ENCODE measurements at regions of chr6 and their contacts with region 1.

Region 1: DNA sequence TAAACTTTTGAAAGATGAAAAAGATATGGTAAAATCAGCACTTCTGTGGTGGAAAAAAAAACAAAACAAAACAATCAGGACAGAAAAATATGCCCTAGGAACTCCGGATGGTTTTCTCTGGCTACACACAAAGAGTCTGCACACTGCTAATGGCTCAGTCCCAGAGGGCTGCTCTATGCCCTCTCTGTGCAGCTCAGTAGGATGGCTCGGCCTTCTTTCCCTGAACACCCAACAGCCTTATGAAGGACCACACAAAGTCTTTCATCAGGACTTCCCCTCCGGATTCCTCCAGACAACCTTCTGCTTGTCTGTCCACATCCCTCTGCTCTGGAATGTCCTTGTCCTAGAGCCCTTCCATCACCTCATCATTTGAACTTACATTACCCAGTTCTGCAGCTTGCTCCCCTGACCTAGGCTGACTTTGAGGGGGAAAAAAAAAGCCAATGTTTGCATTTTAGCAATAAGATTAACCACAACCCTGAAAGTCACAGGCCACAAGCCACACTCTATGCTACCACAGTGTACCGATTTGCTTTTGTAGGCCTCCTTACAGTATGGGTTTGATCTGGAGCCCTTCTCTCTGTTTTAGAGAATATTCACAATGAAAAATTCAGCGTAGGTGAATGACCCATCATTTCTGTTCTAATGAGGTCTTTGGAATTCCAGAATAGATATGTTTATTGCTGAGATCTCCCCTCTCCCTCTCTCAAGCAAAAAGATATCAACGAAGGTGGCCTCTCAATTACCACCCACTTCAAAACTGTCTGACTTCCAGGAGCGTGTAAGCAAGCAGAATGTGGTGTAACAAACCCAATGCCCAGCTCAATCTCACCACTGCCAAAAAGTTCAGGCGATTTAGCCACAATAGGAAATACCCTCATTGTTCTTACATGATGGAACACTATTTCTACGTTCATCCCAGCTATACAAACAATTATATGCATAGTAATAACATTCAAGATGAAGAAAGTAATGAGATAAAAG is 164.0 kb downstream of the GMDS start:
- DNase-seq: peak; percentile 35
- H3K4me3 Mint-ChIP-seq: peak overlapping the region; percentile 3
- H3K27ac Mint-ChIP-seq: peak overlapping the region; percentile 71
- H3K4me1 Mint-ChIP-seq: peaks cover 51% of the 10 kb centered on the region
- H3K27me3 Mint-ChIP-seq: peaks cover 5% of the 10 kb centered on the region

Region 2: DNA sequence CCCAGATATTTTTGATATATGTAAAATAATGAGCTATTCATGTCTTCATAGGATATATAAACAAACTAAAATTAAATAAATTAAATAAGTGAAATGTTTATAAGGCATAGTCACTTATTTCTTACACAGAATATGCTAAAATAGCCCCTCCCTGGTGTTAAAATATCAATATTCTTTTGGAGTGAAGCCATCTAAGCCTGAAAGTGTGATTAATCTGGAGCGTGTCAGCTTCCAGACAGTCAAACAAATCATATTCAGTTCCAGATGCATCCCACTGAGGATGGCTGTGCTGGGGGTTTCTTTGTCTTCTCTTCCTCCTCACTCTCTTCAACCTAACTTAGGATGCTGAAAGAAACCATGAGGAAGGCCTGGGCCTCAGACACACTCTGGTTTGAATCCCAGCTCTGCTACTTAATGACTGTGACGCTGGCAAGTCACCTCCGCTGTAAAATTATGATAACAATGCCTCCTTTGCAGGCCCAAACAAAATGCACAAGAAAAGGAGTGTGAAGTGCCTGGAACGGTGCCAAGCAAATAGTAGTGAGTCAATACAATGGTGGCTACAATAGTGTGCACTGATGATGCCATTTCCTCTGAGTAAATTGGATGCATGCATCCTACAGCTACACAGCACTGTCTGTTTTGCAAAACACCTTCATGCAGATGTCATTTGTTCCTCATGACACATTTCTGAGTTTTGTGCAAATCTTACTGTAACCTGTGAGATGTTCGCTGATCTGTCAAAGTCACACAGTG is 310.3 kb before region 1 on chr6:
- intact Hi-C with region 1: loop called (anchors 1 kb)
- DNase-seq: no peak
- H3K4me3 Mint-ChIP-seq: no peak overlapping the region
- H3K27ac Mint-ChIP-seq: no peak overlapping the region
- H3K4me1 Mint-ChIP-seq: peaks cover 25% of the 10 kb centered on the region
- H3K27me3 Mint-ChIP-seq: no peaks in the 10 kb centered on the region

Region 3: GRCh38 chr6:2038092-2038491 is 43.4 kb before region 1 on chr6:
- intact Hi-C with region 1: loop called (anchors 1 kb)
- DNase-seq: peak; percentile 47
- H3K4me3 Mint-ChIP-seq: peak overlapping the region; percentile 25
- H3K27ac Mint-ChIP-seq: no peak overlapping the region
- H3K4me1 Mint-ChIP-seq: peaks cover 41% of the 10 kb centered on the region
- H3K27me3 Mint-ChIP-seq: peaks cover 14% of the 10 kb centered on the region

Region 4: GRCh38 chr6:2127484-2127911 is 46.1 kb after region 1 on chr6:
- intact Hi-C with region 1: loop called (anchors 1 kb)
- DNase-seq: peak; percentile 14
- H3K4me3 Mint-ChIP-seq: peak overlapping the region; percentile 32
- H3K27ac Mint-ChIP-seq: peak overlapping the region; percentile 76
- H3K4me1 Mint-ChIP-seq: peaks cover 35% of the 10 kb centered on the region
- H3K27me3 Mint-ChIP-seq: no peaks in the 10 kb centered on the region

Region 5: DNA sequence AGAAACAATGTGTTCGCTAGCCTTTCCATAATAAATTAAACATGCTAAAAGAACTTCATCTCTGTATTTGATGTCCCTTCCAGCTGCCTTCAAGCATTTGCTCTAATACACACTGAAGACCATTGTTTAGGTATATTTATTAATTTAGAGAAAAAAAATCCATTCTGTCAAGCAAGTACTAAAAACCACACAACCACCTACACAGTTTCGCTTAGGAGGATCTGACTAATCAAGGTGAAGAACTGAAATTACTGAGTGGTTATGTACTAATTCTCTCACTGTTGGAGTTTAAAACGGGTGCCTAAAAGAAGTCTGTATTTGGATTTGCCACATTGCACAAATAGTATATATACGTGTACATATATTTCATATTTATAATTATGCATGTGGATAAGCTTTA is 105.1 kb after region 1 on chr6:
- intact Hi-C with region 1: loop called (anchors 1 kb)
- DNase-seq: no peak
- H3K4me3 Mint-ChIP-seq: no peak overlapping the region
- H3K27ac Mint-ChIP-seq: peak overlapping the region; percentile 65
- H3K4me1 Mint-ChIP-seq: peaks cover 20% of the 10 kb centered on the region
- H3K27me3 Mint-ChIP-seq: peaks cover 6% of the 10 kb centered on the region